Activated CD8-positive, alpha-beta T cell treated with anti-CD3 and anti-CD28 coated beads for 36 hours (primary cell): ENCODE measurements at regions of chr9 and their contacts with region 1.

Region 1: GRCh38 chr9:114405294-114406034 is 17.7 kb upstream of the AKNA start:
- DNase-seq: peak; percentile 88
- ATAC-seq: peak; percentile 98
- H3K4me3 Mint-ChIP-seq: no peak overlapping the region
- H3K27ac Mint-ChIP-seq: no peak overlapping the region
- H3K4me1 Mint-ChIP-seq: peaks cover 2% of the 10 kb centered on the region
- H3K27me3 Mint-ChIP-seq: no peaks in the 10 kb centered on the region
- CTCF ChIP-seq: peak; percentile 87

Region 2: DNA sequence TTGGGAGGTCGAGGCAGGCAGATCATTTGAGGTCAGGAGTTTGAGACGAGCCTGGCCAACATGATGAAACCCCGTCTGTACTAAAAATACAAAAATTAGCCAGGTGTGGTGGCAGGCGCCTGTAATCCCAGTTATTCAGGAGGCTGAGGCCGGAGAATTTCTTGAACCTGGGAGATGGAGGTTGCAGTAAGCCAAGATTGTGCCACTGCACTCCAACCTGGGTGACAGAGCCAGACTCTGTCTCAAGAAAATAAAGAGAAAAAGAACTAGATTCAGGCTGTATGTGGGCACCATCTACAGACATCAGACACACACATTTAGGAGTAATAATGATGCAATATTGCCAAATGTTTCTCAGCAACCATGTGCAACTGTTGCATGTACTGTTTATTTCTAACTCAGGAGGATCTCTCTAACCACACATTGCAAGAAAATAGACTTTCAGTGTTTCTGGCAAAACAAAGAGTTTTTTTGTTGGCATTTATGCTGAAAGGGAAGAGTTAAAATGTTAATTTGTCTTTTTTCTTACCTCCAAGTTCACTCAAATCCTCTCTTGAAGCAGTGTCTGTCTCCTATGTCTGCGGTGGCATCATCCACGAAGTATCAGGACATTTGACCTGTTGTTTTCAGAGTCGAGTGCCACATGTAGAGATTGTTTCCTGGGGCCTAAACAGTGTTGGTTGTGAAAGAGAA is 87.7 kb before region 1 on chr9:
- CTCF ChIA-PET with region 1: no interaction called
- POLR2A ChIA-PET with region 1: no interaction called
- intact Hi-C with region 1: no loop called
- DNase-seq: no peak
- ATAC-seq: no peak
- H3K4me3 Mint-ChIP-seq: no peak overlapping the region
- H3K27ac Mint-ChIP-seq: peak overlapping the region; percentile 70
- H3K4me1 Mint-ChIP-seq: peaks cover 6% of the 10 kb centered on the region
- H3K27me3 Mint-ChIP-seq: peaks cover 5% of the 10 kb centered on the region
- CTCF ChIP-seq: no peak

Region 3: DNA sequence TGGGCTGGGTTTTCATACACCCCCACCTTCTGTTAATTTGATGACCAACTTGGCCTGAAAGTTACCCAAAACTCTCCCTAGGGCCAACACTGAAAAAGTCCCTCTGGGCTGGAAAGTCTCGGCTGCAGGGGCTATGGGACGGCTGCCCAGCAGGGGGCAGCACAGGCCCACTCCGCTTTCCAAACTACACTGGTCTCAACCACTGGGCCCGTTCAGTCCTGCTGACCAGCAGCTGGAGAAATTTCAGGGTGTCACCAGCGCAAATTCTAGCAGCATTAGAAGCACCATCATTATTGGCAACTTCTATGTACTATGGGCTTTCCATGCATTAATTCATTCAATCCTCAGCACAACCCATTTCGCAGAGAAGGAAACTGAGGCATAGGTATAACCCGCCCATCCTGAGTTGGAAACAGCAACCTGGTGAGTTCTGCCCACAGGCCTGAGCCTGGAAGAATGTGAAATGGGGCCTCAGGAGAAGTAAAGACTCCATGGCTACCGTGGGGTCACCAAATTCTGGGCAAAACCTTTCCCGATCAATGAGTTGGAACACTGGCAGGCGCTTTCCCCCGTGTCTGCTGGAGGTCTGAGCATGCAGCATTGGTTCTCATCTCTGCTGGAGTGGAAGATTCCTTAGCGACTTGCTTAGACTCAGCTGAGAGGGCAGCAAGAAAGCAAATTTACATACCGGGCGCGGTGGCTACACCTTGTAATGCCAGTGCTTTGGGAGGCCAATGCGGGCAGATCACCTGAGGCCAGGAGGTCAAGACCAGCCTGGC is 66.1 kb before region 1 on chr9:
- CTCF ChIA-PET with region 1: interaction called, 12 read pairs
- POLR2A ChIA-PET with region 1: no interaction called
- intact Hi-C with region 1: no loop called
- DNase-seq: peak; percentile 71
- ATAC-seq: peak; percentile 70
- H3K4me3 Mint-ChIP-seq: no peak overlapping the region
- H3K27ac Mint-ChIP-seq: peak overlapping the region; percentile 49
- H3K4me1 Mint-ChIP-seq: peaks cover 34% of the 10 kb centered on the region
- H3K27me3 Mint-ChIP-seq: no peaks in the 10 kb centered on the region
- CTCF ChIP-seq: peak; percentile 84

Region 4: DNA sequence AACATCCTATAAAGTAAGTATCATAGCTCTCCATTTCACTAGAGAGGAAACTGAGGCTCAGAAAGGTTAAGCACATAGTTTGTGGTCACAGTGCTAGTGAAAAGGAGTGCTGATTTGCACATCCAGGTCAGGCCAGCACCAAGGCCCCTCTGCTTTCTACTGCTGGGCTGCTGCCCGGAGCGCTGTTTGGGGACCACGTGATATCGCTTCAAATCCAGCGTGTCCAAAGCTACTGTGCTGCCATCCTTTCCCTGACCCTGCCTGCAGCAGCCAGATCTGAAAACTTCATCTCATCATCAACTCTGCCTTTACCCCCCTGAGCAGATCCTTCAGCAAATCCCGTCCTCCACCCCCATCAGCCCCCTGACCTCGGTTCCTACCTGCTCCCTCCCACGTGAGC is 23.0 kb after region 1 on chr9:
- CTCF ChIA-PET with region 1: interaction called, 34 read pairs
- POLR2A ChIA-PET with region 1: no interaction called
- intact Hi-C with region 1: no loop called
- DNase-seq: no peak
- ATAC-seq: no peak
- H3K4me3 Mint-ChIP-seq: no peak overlapping the region
- H3K27ac Mint-ChIP-seq: no peak overlapping the region
- H3K4me1 Mint-ChIP-seq: no peaks in the 10 kb centered on the region
- H3K27me3 Mint-ChIP-seq: no peaks in the 10 kb centered on the region
- CTCF ChIP-seq: no peak

Region 5: DNA sequence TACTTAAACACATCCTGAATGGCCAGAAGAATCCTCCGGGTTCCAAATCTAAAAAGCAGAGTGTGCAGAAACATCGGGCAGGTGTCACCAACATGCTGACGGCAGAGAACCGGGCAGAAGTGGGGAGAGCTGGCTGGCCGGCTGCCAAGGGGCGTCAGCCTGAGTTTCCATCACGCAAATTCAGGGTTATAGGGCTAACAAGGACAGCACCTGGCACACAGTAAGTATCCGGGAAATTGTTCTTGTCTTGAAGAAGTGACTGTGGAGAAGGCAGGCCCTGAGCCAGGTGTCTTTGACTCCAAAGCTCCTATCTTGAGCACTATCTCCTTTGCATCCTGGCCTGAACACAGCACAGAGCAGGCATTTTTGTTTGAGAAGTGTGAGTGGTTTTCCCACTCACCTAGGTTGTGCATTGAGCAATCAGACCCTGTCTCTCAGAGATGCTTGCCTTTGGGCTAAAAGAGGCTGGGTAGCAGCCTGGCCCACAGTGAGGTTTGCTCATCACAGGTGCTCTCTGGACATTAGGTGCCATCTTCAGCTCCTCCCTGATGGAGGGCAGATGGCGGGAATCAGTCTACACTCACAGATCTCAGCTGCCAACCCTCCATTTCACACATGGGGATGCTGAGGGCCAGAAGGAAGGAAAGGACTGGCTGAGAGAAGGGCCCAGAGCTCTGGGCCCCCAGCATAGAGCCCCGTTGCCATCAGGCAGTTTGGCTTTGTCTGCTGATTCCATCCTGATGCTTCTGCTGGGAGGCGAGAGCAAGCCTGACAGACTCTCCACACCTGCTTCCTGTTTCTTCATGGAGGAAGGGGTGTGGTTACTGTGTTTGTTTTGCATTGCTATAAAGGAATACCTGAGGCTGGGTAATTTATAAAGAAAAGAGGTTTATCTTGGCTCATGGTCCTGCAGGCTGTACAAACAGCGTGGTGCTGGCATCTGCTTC is 47.0 kb after region 1 on chr9:
- CTCF ChIA-PET with region 1: interaction called, 12 read pairs
- POLR2A ChIA-PET with region 1: no interaction called
- intact Hi-C with region 1: loop called (anchors 5 kb)
- DNase-seq: peak; percentile 39
- ATAC-seq: no peak
- H3K4me3 Mint-ChIP-seq: no peak overlapping the region
- H3K27ac Mint-ChIP-seq: peak overlapping the region; percentile 31
- H3K4me1 Mint-ChIP-seq: peaks cover 20% of the 10 kb centered on the region
- H3K27me3 Mint-ChIP-seq: no peaks in the 10 kb centered on the region
- CTCF ChIP-seq: no peak

Region 6: DNA sequence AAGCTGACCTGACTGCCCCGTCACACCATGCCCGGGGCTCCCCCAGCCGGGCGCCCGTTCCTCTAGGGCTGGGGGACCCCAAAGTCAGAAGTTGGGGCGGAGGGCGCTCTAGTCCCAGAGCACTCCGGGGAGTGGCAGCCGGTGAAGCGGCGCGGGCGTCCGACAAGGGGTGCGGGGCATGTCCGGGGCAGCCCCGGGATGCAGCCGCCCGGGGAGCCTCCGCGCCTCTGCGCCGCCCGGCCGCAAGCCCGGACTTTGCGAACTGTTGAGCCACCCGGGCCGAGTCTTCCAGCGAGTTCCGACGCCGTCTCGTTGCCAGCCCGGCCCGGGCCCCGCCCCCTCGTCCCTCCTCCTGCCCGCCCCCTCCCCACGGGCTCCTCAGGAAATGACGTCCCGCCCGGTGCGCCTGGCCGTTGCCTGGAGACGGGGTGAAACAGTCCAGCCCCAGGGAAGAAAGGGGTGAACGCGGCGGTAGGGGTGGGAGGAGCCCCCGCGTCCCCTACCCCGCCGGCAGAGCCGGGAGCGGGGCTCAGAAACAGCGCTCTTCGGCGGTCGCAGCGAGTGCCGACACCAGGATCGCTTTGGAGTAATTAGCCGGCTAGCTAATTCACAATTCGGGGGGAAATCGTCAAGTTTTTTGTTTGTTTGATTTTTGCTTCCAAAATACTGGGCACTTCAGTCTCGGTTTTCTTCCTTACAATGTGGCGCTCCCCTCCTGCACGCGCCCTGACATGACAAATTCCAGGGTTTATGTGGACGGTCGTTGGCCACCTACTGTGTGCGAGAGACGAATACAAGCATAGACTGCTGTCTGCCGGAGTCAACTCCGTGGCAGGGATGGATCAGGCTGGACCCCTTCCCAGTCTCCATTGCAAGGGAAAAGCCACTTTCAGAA is 100.0 kb after region 1 on chr9 and contains the start of gene WHRN:
- CTCF ChIA-PET with region 1: interaction called, 66 read pairs
- POLR2A ChIA-PET with region 1: interaction called, 3 read pairs
- intact Hi-C with region 1: loop called (anchors 5 kb)
- DNase-seq: peak; percentile 91
- ATAC-seq: peak; percentile 81
- H3K4me3 Mint-ChIP-seq: peak within 1 kb of the TSS; percentile 77
- H3K27ac Mint-ChIP-seq: peak within 1 kb of the TSS; percentile 43
- H3K4me1 Mint-ChIP-seq: peaks cover 28% of the 10 kb centered on the region
- H3K27me3 Mint-ChIP-seq: peaks cover 24% of the 10 kb centered on the region
- CTCF ChIP-seq: no peak
- total RNA-seq, gene WHRN: 12.6 to 14.9 TPM

Region 7: DNA sequence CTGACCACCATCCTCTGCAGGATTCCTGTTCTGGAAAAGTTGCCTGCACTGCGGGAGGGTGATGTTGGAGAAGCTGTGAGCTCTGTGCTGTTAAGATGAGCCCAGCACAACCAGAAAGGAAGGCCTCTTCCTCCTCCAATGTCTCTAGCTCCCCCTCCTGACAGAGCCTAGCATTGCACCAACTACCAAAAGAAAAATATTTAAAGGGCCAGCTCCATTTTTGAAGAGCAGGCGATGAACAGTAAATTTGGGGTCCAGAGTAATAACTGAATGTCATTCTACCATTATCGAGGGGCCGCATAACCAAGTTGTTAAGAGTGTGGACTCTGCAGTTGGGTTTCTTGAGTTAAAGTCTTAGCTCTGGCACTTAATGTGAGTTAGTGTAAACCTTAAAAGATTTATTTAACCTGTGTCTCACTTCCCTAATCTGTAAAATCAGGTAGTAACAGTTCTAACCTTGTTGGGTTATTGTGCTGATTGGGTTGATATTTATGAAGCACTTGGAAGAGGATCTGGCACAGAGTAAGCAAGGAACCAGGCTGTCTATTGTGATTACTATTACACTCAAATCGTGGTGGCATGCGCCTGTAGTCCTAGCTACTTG is 248.2 kb after region 1 on chr9:
- CTCF ChIA-PET with region 1: interaction called, 249 read pairs
- POLR2A ChIA-PET with region 1: interaction called, 3 read pairs
- intact Hi-C with region 1: loop called (anchors 2 kb)
- DNase-seq: peak; percentile 90
- ATAC-seq: peak; percentile 97
- H3K4me3 Mint-ChIP-seq: no peak overlapping the region
- H3K27ac Mint-ChIP-seq: no peak overlapping the region
- H3K4me1 Mint-ChIP-seq: peaks cover 25% of the 10 kb centered on the region
- H3K27me3 Mint-ChIP-seq: no peaks in the 10 kb centered on the region
- CTCF ChIP-seq: peak; percentile 91